ENCODE measurements at regions of chr2 and their contacts with region 1.

Region 1: DNA sequence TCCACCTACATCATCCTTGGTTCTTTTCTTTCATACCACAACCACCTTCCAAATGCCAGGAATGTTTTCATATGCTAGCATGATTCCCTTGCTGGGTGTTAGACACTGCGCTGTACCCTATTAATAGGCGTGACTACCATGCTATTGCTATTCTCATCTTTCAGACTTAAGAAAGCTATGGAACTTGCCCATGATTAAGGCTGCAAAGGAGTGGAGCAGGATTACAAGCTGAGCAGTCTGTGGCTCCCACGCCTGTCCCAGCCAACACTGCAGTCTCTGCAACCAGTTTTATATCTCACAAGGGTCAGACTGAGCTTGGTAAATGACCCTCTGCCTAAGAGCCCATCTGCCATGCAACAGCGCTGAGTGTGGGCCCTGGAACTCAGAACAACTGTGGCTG is 285.7 kb upstream of the POU3F3 start:
- DNase-seq: no peak
- H3K4me3 ChIP-seq: no peak overlapping the region
- H3K27ac ChIP-seq: no peak overlapping the region
- H3K4me1 ChIP-seq: no peaks in the 10 kb centered on the region
- H3K27me3 ChIP-seq: no peaks in the 10 kb centered on the region
- CTCF ChIP-seq: no peak
- EP300 ChIP-seq: no peak
- POLR2A ChIP-seq: no peak

Region 2: GRCh38 chr2:102967451-102967850 is 1600.8 kb before region 1 on chr2:
- in situ Hi-C with region 1: no loop called
- intact Hi-C with region 1: loop called (anchors 5 kb)
- DNase-seq: no peak
- H3K4me3 ChIP-seq: no peak overlapping the region
- H3K27ac ChIP-seq: no peak overlapping the region
- H3K4me1 ChIP-seq: no peaks in the 10 kb centered on the region
- H3K27me3 ChIP-seq: no peaks in the 10 kb centered on the region
- CTCF ChIP-seq: no peak
- EP300 ChIP-seq: no peak
- POLR2A ChIP-seq: no peak